Activated CD4-positive, alpha-beta memory T cell treated with anti-CD3 and anti-CD28 coated beads for 36 hours (primary cell): ENCODE measurements at regions of chr15 and their contacts with region 1.

Region 1: DNA sequence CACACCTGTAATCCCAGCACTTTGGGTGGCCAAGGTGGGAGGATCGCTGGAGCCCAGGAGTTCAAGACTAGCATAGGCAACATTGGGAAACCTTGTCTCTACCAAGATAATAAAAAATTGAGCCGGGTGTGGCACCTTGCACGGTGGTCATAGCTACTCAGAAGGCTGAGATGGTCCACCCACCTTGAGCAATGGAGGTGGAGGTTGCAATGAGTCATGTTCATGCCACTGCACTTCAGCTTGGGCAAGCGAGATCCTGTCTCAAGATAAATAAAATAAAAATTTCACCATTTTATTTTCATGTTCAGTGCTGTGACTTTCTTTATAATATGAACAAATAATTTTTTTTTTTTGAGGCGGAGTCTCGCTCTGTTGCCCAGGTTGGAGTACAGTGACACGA is 12.5 kb downstream of the MAPK6 start:
- DNase-seq: no peak
- H3K4me3 Mint-ChIP-seq: no peak overlapping the region
- H3K27ac Mint-ChIP-seq: no peak overlapping the region
- H3K4me1 Mint-ChIP-seq: peaks cover 33% of the 10 kb centered on the region
- H3K27me3 Mint-ChIP-seq: no peaks in the 10 kb centered on the region

Region 2: DNA sequence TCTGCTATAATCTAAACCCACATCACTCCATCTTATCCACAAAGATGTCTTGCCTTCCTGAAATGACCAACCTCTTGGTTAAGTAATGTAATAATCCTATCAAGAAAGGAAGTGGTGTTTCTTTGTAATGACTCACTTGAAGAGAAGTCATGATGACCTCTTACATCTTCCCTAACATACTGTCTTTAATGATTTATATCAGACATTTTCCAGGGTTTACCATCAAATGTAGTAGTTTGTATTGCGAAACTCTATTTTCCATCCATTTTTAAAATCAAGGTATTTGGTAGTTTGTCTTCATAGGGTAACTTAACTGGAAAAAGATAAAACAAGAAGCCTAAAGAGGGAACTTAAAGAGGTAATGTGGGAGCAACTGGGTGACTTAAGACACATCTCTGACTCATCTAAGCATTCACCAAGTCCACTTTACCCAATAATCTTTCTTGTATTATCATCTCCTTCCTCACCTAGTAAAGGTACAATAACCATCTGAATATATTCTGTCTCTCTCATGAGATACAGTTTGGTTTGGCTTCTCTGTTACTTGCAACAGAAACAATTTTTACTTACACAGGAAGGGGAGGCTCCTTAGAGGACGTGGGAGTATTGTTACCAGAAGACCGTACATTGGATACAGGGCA is 18.3 kb before region 1 on chr15:
- CTCF ChIA-PET with region 1: no interaction called
- POLR2A ChIA-PET with region 1: no interaction called
- intact Hi-C with region 1: no loop called
- DNase-seq: no peak
- H3K4me3 Mint-ChIP-seq: no peak overlapping the region
- H3K27ac Mint-ChIP-seq: peak overlapping the region; percentile 82
- H3K4me1 Mint-ChIP-seq: peaks cover 50% of the 10 kb centered on the region
- H3K27me3 Mint-ChIP-seq: no peaks in the 10 kb centered on the region

Region 3: DNA sequence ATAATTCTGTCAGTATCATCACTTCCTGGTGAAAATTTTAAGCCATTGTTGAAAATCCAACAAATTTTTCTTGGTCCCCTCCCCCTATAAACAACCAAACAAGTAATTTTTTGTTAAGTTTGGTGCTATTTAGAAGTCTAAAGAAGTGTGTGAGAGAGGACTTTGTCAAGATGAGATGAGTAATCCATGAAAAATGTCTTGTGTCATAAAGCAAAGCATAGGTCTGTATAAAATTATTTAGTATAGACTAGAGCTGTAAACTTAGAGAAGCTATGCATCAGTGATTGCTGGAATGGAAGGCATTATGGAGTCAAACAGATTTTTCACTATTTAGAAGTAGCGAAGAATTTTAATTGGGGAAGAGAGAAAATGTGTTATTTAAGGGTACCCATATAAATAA is 18.9 kb after region 1 on chr15:
- CTCF ChIA-PET with region 1: interaction called, 10 read pairs
- POLR2A ChIA-PET with region 1: no interaction called
- intact Hi-C with region 1: no loop called
- DNase-seq: no peak
- H3K4me3 Mint-ChIP-seq: no peak overlapping the region
- H3K27ac Mint-ChIP-seq: no peak overlapping the region
- H3K4me1 Mint-ChIP-seq: peaks cover 16% of the 10 kb centered on the region
- H3K27me3 Mint-ChIP-seq: no peaks in the 10 kb centered on the region

Region 4: DNA sequence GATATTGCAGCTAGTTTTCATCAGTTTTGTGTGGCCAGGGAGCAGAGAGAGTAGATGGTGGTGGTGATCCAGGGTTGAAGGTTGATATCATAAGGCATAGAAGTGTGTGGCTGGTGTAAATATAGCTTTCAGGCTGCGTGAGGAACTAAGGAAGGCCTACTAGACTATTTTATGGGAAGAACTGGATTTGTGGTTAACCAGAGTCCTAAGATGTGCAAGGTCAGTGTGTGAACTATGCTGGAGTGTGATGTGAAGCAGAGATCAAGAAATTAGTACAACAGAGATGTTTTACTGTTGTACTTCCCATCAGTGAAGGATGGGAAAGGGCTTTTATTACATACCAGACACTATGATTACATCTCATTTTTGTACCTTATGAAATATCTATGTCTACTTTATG is 28.9 kb after region 1 on chr15:
- CTCF ChIA-PET with region 1: no interaction called
- POLR2A ChIA-PET with region 1: no interaction called
- intact Hi-C with region 1: no loop called
- DNase-seq: no peak
- H3K4me3 Mint-ChIP-seq: no peak overlapping the region
- H3K27ac Mint-ChIP-seq: no peak overlapping the region
- H3K4me1 Mint-ChIP-seq: no peaks in the 10 kb centered on the region
- H3K27me3 Mint-ChIP-seq: no peaks in the 10 kb centered on the region